ENCODE measurements at regions of chr19 and their contacts with region 1.

Region 1: DNA sequence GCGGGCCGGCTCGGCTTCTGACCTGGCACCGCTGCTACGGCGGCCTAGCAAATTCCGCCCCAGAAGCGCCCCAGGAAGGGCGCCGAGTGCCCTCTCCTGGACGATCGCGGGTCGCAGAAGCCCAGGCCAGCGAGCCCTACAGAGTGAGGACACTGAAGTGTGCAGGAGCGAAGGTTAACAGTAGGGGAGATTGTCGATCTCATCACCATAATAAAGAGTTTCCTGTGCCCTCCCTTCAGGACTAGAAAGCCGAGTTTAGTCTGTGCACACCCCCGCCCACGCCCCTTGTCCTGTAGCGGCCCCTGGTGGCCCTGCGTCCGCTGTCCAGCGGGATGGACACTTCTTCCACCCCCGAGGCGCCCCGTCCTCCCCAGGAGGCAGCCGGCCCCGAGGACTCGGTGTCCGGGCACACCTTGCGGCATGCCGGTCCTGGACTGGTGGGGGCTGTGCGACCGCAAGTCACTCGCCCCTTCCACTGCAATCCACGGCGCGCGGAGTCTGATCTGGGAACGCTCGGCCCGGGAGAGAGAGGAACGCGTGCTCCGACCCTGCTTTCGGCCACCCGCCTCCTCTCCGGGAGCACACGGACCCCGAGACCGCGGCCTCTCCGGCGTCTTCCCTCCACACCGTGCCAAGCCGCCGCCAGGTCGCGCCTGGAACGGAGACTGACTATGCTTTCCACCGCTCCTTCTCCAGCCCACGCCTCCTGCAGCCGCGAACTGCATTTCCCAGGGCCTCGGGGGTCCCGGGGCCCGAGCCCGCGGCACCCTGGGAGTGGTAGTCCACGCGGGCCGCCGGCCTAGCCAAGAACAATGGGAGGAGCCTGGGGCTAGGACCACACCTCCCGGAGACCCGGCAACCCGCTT is 769 bp upstream of the KMT2B start:
- DNase-seq: peak; percentile 97 to 99 (median 98)
- H3K4me3 ChIP-seq: peak overlapping the region; percentile 68 to 81
- H3K4me3 Mint-ChIP-seq: peak overlapping the region; percentile 91 to 99 (median 94)
- H3K27ac ChIP-seq: peak overlapping the region; percentile 71
- H3K27ac Mint-ChIP-seq: peak overlapping the region; percentile 90 to 99 (median 94)
- H3K4me1 ChIP-seq: peaks cover 59% of the 10 kb centered on the region
- H3K4me1 Mint-ChIP-seq: peaks cover 44 to 72% (median 55%) of the 10 kb centered on the region in 4 donors
- H3K27me3 ChIP-seq: no peaks in the 10 kb centered on the region
- H3K27me3 Mint-ChIP-seq: no peaks in the 10 kb centered on the region

Region 2: GRCh38 chr19:35509861-35510625 is 207.0 kb before region 1 on chr19:
- CTCF ChIA-PET with region 1: interaction called, 3 read pairs
- POLR2A ChIA-PET with region 1: no interaction called
- intact Hi-C with region 1: loop called (anchors 1 kb)
- DNase-seq: peak; percentile 50 to 66 (median 56)
- H3K4me3 ChIP-seq: peak overlapping the region; percentile 22 to 49
- H3K4me3 Mint-ChIP-seq: peak overlapping the region; percentile 57 to 84 (median 80)
- H3K27ac ChIP-seq: no peak overlapping the region
- H3K27ac Mint-ChIP-seq: peak overlapping the region in 4 of 7 donors; percentile 21 to 74 (median 57)
- H3K4me1 ChIP-seq: peaks cover 19% of the 10 kb centered on the region
- H3K4me1 Mint-ChIP-seq: peaks cover 10 to 18% (median 13%) of the 10 kb centered on the region in 4 donors
- H3K27me3 ChIP-seq: no peaks in the 10 kb centered on the region
- H3K27me3 Mint-ChIP-seq: peaks cover 23 to 24% of the 10 kb centered on the region in 2 donors

Region 3: GRCh38 chr19:35578707-35579106 is 138.3 kb before region 1 on chr19:
- CTCF ChIA-PET with region 1: no interaction called
- POLR2A ChIA-PET with region 1: no interaction called
- intact Hi-C with region 1: no loop called
- DNase-seq: no peak
- H3K4me3 ChIP-seq: no peak overlapping the region
- H3K4me3 Mint-ChIP-seq: no peak overlapping the region
- H3K27ac ChIP-seq: no peak overlapping the region
- H3K27ac Mint-ChIP-seq: no peak overlapping the region
- H3K4me1 ChIP-seq: no peaks in the 10 kb centered on the region
- H3K4me1 Mint-ChIP-seq: no peaks in the 10 kb centered on the region
- H3K27me3 ChIP-seq: no peaks in the 10 kb centered on the region
- H3K27me3 Mint-ChIP-seq: peaks cover 10% of the 10 kb centered on the region in 2 donors

Region 4: DNA sequence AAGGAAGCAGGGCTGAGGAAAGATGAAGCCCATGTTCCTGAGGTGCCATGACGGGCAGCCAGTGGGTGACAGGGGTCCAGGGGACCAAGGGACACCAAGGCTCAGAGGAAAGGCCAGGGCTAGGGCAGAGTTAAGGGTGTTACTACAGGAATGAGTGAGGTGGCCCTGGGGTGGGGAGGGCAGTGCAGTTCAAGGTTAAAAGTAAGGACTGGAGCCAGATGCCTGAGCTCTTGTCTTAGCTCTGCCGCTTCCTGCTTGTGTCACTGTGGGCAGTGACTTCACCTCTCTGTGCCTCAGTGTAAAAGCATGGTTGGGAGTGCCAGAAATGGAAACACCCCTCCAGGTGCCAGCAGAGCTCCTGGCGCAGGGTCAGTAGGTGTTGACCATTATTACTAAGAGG is 80.4 kb before region 1 on chr19:
- CTCF ChIA-PET with region 1: no interaction called
- POLR2A ChIA-PET with region 1: no interaction called
- intact Hi-C with region 1: no loop called
- DNase-seq: no peak
- H3K4me3 ChIP-seq: no peak overlapping the region
- H3K4me3 Mint-ChIP-seq: no peak overlapping the region
- H3K27ac ChIP-seq: no peak overlapping the region
- H3K27ac Mint-ChIP-seq: peak overlapping the region in 1 of 7 donors; percentile 53
- H3K4me1 ChIP-seq: peaks cover 7% of the 10 kb centered on the region
- H3K4me1 Mint-ChIP-seq: peaks cover 4 to 15% (median 6%) of the 10 kb centered on the region in 4 donors
- H3K27me3 ChIP-seq: no peaks in the 10 kb centered on the region
- H3K27me3 Mint-ChIP-seq: no peaks in the 10 kb centered on the region

Region 5: DNA sequence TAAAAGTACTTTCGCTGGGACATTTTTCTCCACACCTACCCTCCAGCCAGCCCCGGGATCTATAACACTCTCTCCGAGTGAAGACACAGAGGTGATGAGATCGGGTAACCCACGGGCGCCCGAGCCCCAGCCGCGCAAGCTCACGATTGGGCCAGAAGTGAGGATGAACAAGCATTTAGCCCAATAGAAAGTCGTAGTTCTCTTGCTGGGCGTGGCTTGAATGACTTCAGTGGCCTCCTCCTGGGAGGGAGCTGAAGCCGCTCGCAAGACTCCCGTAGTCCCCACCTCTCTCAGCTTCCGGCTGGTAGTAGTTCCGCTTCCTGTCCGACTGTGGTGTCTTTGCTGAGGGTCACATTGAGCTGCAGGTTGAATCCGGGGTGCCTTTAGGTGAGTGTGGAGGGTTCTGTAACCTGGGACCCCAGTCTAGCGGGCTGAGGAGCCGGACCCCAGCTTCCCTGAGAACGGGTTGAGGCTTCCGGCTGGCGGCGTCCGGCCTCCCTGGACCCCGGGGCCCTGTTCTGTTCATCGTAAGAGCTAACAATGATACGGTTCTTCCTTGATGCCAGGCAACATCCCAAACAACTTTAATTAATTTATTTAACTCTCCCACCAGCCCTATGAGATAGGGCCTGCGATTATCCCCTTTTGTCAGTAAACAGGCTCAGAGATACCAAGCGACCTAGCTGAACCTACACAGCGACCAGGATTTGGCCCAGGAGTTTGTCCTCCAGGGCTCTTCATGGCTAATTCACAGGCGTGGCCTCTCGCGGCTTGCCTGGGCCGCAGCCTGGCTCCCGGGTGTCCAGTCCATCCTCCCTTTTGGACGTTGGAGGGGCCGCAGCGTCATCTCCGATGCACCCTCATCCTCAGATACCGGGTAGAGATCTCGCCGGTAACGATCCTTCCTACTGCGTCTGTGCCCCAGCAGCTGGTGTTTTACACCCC is 68.7 kb before region 1 on chr19 and contains the start of gene COX6B1:
- CTCF ChIA-PET with region 1: no interaction called
- POLR2A ChIA-PET with region 1: interaction called, 3 read pairs
- intact Hi-C with region 1: loop called (anchors 1 kb)
- DNase-seq: peak; percentile 90 to 98 (median 93)
- H3K4me3 ChIP-seq: peak within 1 kb of the TSS; percentile 72 to 93
- H3K4me3 Mint-ChIP-seq: peak within 1 kb of the TSS; percentile 93 to 99 (median 98)
- H3K27ac ChIP-seq: peak within 1 kb of the TSS; percentile 86
- H3K27ac Mint-ChIP-seq: peak within 1 kb of the TSS; percentile 95 to 99 (median 97)
- H3K4me1 ChIP-seq: peaks cover 41% of the 10 kb centered on the region
- H3K4me1 Mint-ChIP-seq: peaks cover 28 to 52% (median 41%) of the 10 kb centered on the region in 4 donors
- H3K27me3 ChIP-seq: no peaks in the 10 kb centered on the region
- H3K27me3 Mint-ChIP-seq: no peaks in the 10 kb centered on the region
- total RNA-seq, gene COX6B1: 212 to 250 TPM

Region 6: DNA sequence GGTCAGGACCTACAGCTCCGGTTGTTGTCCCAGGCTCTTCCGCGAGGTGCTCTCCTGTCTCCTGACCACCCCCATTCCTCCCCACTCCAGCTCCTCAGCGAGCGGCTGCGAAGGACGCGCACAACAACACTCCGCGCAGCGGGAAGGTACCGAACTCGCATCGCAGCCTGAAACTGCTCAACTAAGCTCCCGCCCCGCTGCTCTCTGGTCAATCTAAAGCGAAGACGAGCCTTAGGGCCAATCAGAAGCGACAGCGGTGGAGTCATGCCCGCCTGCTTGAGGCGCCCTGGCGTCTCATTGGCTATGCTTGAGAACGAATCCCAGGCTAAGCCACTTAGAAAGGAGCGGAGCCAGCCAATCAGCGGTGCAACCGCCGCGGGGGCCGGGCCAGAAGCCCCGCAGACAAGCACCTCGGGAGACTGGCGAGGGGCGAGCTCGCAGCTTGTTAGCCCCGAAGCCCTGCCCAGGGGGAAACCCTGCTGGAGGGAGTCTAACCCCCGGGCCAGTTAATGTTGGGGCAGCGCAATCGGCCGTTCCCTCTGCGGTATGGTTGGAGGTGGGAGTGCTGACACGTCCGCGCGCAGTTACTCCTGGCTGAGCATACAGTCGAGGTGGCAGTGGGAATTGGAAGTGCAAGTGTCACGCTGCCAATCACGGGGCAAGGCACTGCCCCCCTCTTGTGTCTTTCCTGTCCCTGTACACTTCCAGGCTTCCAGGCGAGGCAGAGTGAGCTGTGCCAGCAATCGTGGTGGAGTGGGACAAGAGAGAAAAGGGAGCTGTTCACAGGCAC is 14.6 kb before region 1 on chr19:
- CTCF ChIA-PET with region 1: interaction called, 14 read pairs
- POLR2A ChIA-PET with region 1: interaction called, 61 read pairs
- intact Hi-C with region 1: loop called (anchors 1 kb)
- DNase-seq: peak; percentile 88 to 97 (median 91)
- H3K4me3 ChIP-seq: peak overlapping the region; percentile 92 to 95
- H3K4me3 Mint-ChIP-seq: peak overlapping the region; percentile 90 to 100 (median 98)
- H3K27ac ChIP-seq: peak overlapping the region; percentile 39
- H3K27ac Mint-ChIP-seq: peak overlapping the region; percentile 90 to 98 (median 95)
- H3K4me1 ChIP-seq: peaks cover 11% of the 10 kb centered on the region
- H3K4me1 Mint-ChIP-seq: peaks cover 3 to 9% (median 7%) of the 10 kb centered on the region in 4 donors
- H3K27me3 ChIP-seq: no peaks in the 10 kb centered on the region
- H3K27me3 Mint-ChIP-seq: peaks cover 2 to 5% of the 10 kb centered on the region in 2 donors

Region 7: GRCh38 chr19:35740423-35741202 is 23.6 kb after region 1 on chr19:
- CTCF ChIA-PET with region 1: interaction called, 6 read pairs
- POLR2A ChIA-PET with region 1: interaction called, 51 read pairs
- intact Hi-C with region 1: loop called (anchors 1 kb)
- DNase-seq: peak; percentile 90 to 97 (median 91)
- H3K4me3 ChIP-seq: peak overlapping the region; percentile 83 to 88
- H3K4me3 Mint-ChIP-seq: peak overlapping the region; percentile 88 to 98 (median 90)
- H3K27ac ChIP-seq: peak overlapping the region; percentile 77
- H3K27ac Mint-ChIP-seq: peak overlapping the region; percentile 93 to 99 (median 94)
- H3K4me1 ChIP-seq: peaks cover 59% of the 10 kb centered on the region
- H3K4me1 Mint-ChIP-seq: peaks cover 17 to 65% (median 42%) of the 10 kb centered on the region in 4 donors
- H3K27me3 ChIP-seq: no peaks in the 10 kb centered on the region
- H3K27me3 Mint-ChIP-seq: no peaks in the 10 kb centered on the region

Region 8: DNA sequence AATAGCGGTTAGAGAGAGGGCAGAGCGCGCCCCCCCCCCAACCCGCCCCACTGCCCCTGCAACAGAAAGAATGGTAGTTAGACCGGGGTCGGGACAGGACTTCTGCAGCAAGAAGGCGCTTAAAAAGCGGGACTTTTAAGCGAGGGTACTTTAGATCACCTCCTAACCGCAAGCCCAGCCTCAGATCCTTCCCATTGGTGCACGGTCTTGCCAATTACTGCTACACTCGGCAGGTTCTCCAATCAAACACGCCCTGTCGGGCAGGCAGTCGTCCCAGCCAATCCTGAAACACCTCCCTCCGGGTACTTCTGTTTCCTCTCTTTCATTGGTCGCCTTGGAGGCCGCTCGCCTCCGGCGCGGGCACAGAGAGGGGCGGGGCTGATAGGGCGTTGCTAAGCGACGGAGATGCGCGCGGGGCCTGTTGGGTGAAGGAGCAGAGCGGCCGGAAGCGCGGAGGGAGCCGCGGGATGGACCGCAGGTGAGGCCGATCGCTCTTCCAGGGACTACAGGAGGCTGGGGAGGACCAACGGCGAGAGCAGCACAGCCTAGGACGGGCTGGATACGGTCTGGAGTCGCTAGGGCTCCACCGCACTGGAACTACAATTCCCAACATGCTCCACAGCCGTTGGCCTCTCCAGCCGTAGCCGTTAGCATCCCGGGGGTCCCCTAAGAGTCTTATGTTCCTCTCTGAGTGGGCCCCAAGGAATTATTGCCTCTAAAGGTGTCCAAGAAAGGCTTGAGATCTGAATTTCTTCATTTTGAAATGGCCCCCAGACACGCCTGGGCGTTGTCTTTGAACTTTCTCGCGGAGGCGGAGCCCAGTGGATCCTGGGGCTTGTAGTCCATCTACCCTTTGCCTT is 40.9 kb after region 1 on chr19 and contains the start of gene PROSER3:
- CTCF ChIA-PET with region 1: no interaction called
- POLR2A ChIA-PET with region 1: no interaction called
- intact Hi-C with region 1: loop called (anchors 1 kb)
- DNase-seq: peak; percentile 99 to 100 (median 100)
- H3K4me3 ChIP-seq: peak within 1 kb of the TSS; percentile 90 to 91
- H3K4me3 Mint-ChIP-seq: peak within 1 kb of the TSS; percentile 94 to 100 (median 98)
- H3K27ac ChIP-seq: peak within 1 kb of the TSS; percentile 89
- H3K27ac Mint-ChIP-seq: peak within 1 kb of the TSS; percentile 94 to 99 (median 97)
- H3K4me1 ChIP-seq: peaks cover 36% of the 10 kb centered on the region
- H3K4me1 Mint-ChIP-seq: peaks cover 17 to 40% (median 27%) of the 10 kb centered on the region in 4 donors
- H3K27me3 ChIP-seq: no peaks in the 10 kb centered on the region
- H3K27me3 Mint-ChIP-seq: peaks cover 0 to 2% of the 10 kb centered on the region in 2 donors
- total RNA-seq, gene PROSER3: 45.1 to 46.5 TPM

Region 9: GRCh38 chr19:35768082-35768421 is 51.0 kb after region 1 on chr19:
- CTCF ChIA-PET with region 1: no interaction called
- POLR2A ChIA-PET with region 1: no interaction called
- intact Hi-C with region 1: no loop called
- DNase-seq: no peak
- H3K4me3 ChIP-seq: no peak overlapping the region
- H3K4me3 Mint-ChIP-seq: no peak overlapping the region
- H3K27ac ChIP-seq: no peak overlapping the region
- H3K27ac Mint-ChIP-seq: no peak overlapping the region
- H3K4me1 ChIP-seq: no peaks in the 10 kb centered on the region
- H3K4me1 Mint-ChIP-seq: peaks cover 0 to 3% (median 2%) of the 10 kb centered on the region in 4 donors
- H3K27me3 ChIP-seq: no peaks in the 10 kb centered on the region
- H3K27me3 Mint-ChIP-seq: no peaks in the 10 kb centered on the region

Region 10: GRCh38 chr19:35931161-35931873 is 214.3 kb after region 1 on chr19:
- CTCF ChIA-PET with region 1: no interaction called
- POLR2A ChIA-PET with region 1: interaction called, 3 read pairs
- intact Hi-C with region 1: loop called (anchors 1 kb)
- DNase-seq: peak; percentile 99 to 100 (median 100)
- H3K4me3 ChIP-seq: peak overlapping the region in 1 of 2 donors; percentile 49
- H3K4me3 Mint-ChIP-seq: peak overlapping the region; percentile 76 to 85 (median 80)
- H3K27ac ChIP-seq: peak overlapping the region; percentile 54
- H3K27ac Mint-ChIP-seq: peak overlapping the region; percentile 86 to 97 (median 95)
- H3K4me1 ChIP-seq: peaks cover 47% of the 10 kb centered on the region
- H3K4me1 Mint-ChIP-seq: peaks cover 27 to 62% (median 38%) of the 10 kb centered on the region in 4 donors
- H3K27me3 ChIP-seq: no peaks in the 10 kb centered on the region
- H3K27me3 Mint-ChIP-seq: no peaks in the 10 kb centered on the region